ENCODE measurements at regions of chr5 and their contacts with region 1.

Region 1: GRCh38 chr5:78747055-78747454 is 98.5 kb upstream of the LHFPL2 start:
- DNase-seq: no peak
- H3K4me3 ChIP-seq: no peak overlapping the region
- H3K27ac ChIP-seq: no peak overlapping the region
- H3K4me1 ChIP-seq: no peaks in the 10 kb centered on the region
- CTCF ChIP-seq: no peak

Region 2: DNA sequence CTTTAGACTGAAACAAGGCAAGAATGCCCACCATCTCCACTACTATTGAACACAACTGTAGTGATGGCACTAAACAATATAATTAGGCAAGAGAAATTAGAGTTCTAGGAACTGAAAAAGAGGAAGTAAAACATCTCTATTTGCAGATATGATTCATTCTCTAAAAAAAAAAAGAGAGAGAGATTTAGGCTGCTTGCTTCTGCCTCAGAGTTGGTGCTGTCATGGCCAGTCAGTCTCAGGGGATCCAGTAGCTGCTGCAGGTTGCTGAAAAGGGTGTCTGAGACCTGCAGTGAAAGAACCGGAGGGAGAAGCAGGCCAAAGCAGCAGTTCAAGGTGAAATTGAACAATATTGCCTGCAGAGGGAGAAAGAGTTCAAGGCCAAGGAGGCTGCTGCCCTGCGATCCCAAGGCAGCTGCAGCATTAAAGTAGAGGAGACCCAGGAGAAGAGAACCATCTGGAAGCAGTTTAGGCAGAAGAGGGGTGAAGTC is 525.0 kb before region 1 on chr5:
- CTCF ChIA-PET with region 1: no interaction called
- POLR2A ChIA-PET with region 1: no interaction called
- intact Hi-C with region 1: no loop called
- DNase-seq: peak; percentile 94
- H3K4me3 ChIP-seq: no peak overlapping the region
- H3K27ac ChIP-seq: no peak overlapping the region
- H3K4me1 ChIP-seq: peaks cover 21% of the 10 kb centered on the region
- CTCF ChIP-seq: peak; percentile 74

Region 3: DNA sequence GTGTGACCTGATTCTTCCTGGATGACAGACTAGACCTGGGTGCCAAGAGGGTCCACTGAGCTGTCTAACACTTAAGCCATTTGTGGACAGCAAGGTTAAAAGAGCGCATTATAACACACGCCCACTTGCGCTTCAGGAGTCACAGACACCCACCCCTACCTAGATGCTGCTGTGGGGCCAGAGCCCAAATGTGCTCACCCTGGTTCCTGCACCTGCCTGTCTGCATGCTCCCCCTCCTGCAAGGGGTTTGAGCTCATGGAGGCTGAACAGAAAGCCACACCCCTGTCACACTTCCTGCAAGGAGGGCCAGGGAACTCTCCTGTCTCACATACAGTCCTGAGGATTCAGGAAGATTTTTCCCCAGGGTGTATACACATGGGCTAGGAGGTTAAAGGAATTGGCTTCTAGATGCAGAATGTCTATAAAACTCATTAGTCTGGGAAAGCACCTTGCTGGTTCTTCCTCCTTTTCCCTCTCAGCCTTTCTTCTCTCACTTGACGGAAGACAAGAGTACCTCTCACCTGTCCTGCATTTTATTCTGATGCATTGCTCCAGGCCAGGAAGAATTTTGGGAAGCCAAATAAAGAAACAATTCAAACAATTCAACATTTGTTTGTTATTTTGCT is 11.1 kb before region 1 on chr5:
- CTCF ChIA-PET with region 1: interaction called, 3 read pairs
- POLR2A ChIA-PET with region 1: interaction called, 10 read pairs
- intact Hi-C with region 1: no loop called
- DNase-seq: peak; percentile 51
- H3K4me3 ChIP-seq: no peak overlapping the region
- H3K27ac ChIP-seq: peak overlapping the region; percentile 16
- H3K4me1 ChIP-seq: peaks cover 62% of the 10 kb centered on the region
- CTCF ChIP-seq: no peak

Region 4: DNA sequence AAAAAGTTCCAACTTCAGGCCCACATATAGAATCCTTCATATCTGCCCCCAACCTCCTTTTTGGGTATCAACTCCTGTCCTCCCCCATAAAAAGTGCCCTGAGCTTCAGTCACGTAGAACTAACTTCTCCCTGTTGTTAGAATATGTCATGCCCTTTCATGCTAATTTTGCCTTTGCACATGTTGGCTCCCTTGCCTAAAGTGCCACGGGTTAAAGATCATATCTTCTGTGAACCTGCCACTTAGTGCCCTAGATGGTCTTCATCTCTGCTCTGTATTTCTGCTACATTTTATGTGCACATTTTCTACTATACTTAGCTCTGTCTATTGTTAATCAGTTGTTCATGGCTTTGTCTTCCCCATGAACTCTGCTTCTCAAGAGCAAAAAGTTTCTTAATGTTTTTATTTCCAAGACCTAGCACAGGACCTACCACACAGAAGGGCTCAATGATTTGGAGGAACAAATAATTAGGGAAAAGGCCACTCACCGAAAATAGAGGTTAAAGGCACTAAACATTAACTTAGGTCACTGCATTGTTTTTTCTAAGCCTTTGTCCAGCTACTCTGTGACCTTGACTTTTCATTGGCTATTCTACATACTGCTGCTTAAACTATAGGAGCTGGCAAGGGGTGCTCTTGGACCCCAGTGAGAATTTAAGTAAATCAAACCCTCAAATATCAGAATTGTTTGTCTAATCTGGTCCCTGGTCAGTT is 143.8 kb after region 1 on chr5:
- CTCF ChIA-PET with region 1: no interaction called
- POLR2A ChIA-PET with region 1: no interaction called
- intact Hi-C with region 1: no loop called
- DNase-seq: no peak
- H3K4me3 ChIP-seq: no peak overlapping the region
- H3K27ac ChIP-seq: no peak overlapping the region
- H3K4me1 ChIP-seq: peaks cover 40% of the 10 kb centered on the region
- CTCF ChIP-seq: no peak